K562 (cell line): ENCODE measurements at regions of chr12 and their contacts with region 1.

Region 1: GRCh38 chr12:94145191-94145983 is 3.0 kb upstream of the PLXNC1 start:
- DNase-seq: peak; percentile 23 to 47 (median 32)
- ATAC-seq: peak; percentile 58
- H3K4me3 ChIP-seq: no peak overlapping the region
- H3K27ac ChIP-seq: no peak overlapping the region
- H3K4me1 ChIP-seq: peaks cover 9 to 21% of the 10 kb centered on the region in 2 experiments; a peak in 4 of 5 replicates
- H3K27me3 ChIP-seq: peaks cover 7 to 61% of the 10 kb centered on the region in 2 experiments; a peak in 3 of 5 replicates
- CTCF ChIP-seq: peak; percentile 41 to 63 (median 45); a peak in 5 of 6 replicates
- EP300 ChIP-seq: no peak
- POLR2A ChIP-seq: no peak
- RAD21 ChIP-seq: peak; percentile 60 to 83

Region 2: DNA sequence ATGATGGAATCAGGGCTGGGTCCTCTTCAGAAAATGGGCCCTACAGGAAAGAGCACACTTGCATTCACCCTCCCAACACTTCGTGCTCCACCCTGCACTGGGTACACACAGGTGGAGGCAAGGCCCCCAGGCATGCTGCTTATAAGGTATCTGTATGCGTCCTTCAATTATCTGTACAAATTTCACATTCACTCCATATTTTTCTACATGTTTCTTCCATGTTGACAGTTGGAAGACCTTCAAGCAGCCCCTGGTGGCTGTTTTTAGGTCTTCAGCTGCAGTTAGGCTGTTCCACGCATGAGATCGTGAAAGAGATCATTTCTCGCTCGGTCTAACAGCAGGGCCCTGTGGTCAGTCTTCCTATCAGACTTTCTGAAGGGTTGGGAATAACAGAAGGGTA is 50.1 kb after region 1 on chr12:
- CTCF ChIA-PET with region 1: no interaction called
- POLR2A ChIA-PET with region 1: no interaction called
- in situ Hi-C with region 1: no loop called
- intact Hi-C with region 1: loop called (anchors 5 kb)
- DNase-seq: no peak
- ATAC-seq: 0 out of 3 replicates have a peak, but pooled peaks have one; percentile 47
- H3K4me3 ChIP-seq: no peak overlapping the region
- H3K27ac ChIP-seq: no peak overlapping the region
- H3K4me1 ChIP-seq: 0 out of 5 replicates have a peak, but pooled peaks cover 0 to 3% of the 10 kb centered on the region in 2 experiments
- H3K27me3 ChIP-seq: 0 out of 5 replicates have a peak, but pooled peaks cover 0 to 5% of the 10 kb centered on the region in 2 experiments
- CTCF ChIP-seq: peak; percentile 6 to 43 (median 31); a peak in 5 of 6 replicates
- EP300 ChIP-seq: no peak
- POLR2A ChIP-seq: no peak
- RAD21 ChIP-seq: peak in 1 of 2 experiments; percentile 51; a peak in 3 of 4 replicates